Caco-2 (cell line): ENCODE measurements at regions of chr9 and their contacts with region 1.

Region 1: DNA sequence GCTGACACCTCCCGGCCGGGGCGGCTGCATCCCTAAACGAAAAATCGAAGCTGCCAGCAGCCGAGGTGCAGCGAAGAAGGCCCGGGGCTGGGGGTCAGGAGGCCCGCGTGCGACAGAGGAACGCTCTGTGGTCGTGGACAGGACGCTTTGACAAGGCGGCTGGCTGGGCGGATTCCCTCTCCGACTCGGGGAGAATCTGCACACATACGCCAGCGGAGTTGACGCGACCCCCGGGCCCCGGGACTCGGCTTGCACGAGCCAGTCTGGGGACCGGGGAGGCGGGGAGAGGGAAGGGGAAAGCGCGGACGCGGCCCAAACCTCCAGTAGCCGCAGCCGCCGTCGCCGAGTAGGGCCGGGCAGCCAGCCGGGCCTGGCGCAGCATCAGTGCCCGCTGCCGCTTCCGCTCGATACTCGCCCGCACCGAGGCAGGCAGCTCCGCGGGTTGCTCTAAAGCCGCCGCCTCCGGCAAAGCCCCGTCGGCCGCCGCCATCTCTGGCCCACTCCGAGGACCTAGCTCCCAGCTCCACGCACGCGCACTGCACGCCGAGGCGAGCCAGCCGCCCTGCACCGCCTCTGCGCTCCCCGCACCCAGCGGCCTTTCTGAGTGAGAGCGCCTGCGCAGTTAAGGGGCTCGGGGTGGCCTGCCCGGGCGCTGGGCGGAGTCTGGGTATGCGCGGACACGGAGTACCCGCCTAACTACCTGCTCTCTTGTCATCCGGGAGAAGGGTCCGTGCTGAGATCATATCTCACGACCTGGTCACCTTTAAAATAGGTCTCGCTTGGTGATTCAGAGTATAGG is at the start of gene XPA:
- DNase-seq: peak; percentile 98
- H3K4me3 ChIP-seq: peak within 1 kb of the TSS; percentile 66
- H3K4me3 Mint-ChIP-seq: peak within 1 kb of the TSS; percentile 78
- H3K27ac Mint-ChIP-seq: peak within 1 kb of the TSS; percentile 68
- H3K4me1 ChIP-seq: peaks cover 14% of the 10 kb centered on the region; the same call in 1 of the 2 replicates
- H3K4me1 Mint-ChIP-seq: peaks cover 41% of the 10 kb centered on the region
- H3K27me3 ChIP-seq: no peaks in the 10 kb centered on the region
- H3K27me3 Mint-ChIP-seq: no peaks in the 10 kb centered on the region
- CTCF ChIP-seq: no peak
- total RNA-seq, gene XPA: 15.6 and 18.8 TPM in 2 replicates

Region 2: GRCh38 chr9:97673922-97674321 is 23.1 kb before region 1 on chr9:
- CTCF ChIA-PET with region 1: no interaction called
- POLR2A ChIA-PET with region 1: no interaction called
- intact Hi-C with region 1: no loop called
- DNase-seq: no peak
- H3K4me3 ChIP-seq: no peak overlapping the region
- H3K4me3 Mint-ChIP-seq: no peak overlapping the region
- H3K27ac Mint-ChIP-seq: no peak overlapping the region
- H3K4me1 ChIP-seq: 0 out of 2 replicates have a peak, but pooled peaks cover 3% of the 10 kb centered on the region
- H3K4me1 Mint-ChIP-seq: no peaks in the 10 kb centered on the region
- H3K27me3 ChIP-seq: no peaks in the 10 kb centered on the region
- H3K27me3 Mint-ChIP-seq: no peaks in the 10 kb centered on the region
- CTCF ChIP-seq: no peak

Region 3: GRCh38 chr9:97900738-97901565 is 203.9 kb after region 1 on chr9:
- CTCF ChIA-PET with region 1: interaction called, 4 read pairs
- POLR2A ChIA-PET with region 1: no interaction called
- intact Hi-C with region 1: loop called (anchors 5 kb)
- DNase-seq: peak in 1 of 2 experiments; percentile 61
- H3K4me3 ChIP-seq: no peak overlapping the region
- H3K4me3 Mint-ChIP-seq: no peak overlapping the region
- H3K27ac Mint-ChIP-seq: no peak overlapping the region
- H3K4me1 ChIP-seq: no peaks in the 10 kb centered on the region
- H3K4me1 Mint-ChIP-seq: no peaks in the 10 kb centered on the region
- H3K27me3 ChIP-seq: no peaks in the 10 kb centered on the region
- H3K27me3 Mint-ChIP-seq: no peaks in the 10 kb centered on the region
- CTCF ChIP-seq: peak; percentile 71 to 73